ENCODE measurements at regions of chr13 and their contacts with region 1.

Region 1: GRCh38 chr13:24220086-24220703 is 59.7 kb downstream of the SPATA13 start:
- DNase-seq: peak in 6 of 9 experiments; percentile 41 to 86 (median 54)
- ATAC-seq: peak; percentile 82
- H3K4me3 ChIP-seq: no peak overlapping the region
- H3K4me3 Mint-ChIP-seq: no peak overlapping the region
- H3K27ac ChIP-seq: no peak overlapping the region
- H3K27ac Mint-ChIP-seq: no peak overlapping the region
- H3K4me1 ChIP-seq: peaks cover 19% of the 10 kb centered on the region
- H3K4me1 Mint-ChIP-seq: peaks cover 49% of the 10 kb centered on the region
- H3K27me3 ChIP-seq: no peaks in the 10 kb centered on the region
- H3K27me3 Mint-ChIP-seq: no peaks in the 10 kb centered on the region
- CTCF ChIP-seq: peak; percentile 74

Region 2: DNA sequence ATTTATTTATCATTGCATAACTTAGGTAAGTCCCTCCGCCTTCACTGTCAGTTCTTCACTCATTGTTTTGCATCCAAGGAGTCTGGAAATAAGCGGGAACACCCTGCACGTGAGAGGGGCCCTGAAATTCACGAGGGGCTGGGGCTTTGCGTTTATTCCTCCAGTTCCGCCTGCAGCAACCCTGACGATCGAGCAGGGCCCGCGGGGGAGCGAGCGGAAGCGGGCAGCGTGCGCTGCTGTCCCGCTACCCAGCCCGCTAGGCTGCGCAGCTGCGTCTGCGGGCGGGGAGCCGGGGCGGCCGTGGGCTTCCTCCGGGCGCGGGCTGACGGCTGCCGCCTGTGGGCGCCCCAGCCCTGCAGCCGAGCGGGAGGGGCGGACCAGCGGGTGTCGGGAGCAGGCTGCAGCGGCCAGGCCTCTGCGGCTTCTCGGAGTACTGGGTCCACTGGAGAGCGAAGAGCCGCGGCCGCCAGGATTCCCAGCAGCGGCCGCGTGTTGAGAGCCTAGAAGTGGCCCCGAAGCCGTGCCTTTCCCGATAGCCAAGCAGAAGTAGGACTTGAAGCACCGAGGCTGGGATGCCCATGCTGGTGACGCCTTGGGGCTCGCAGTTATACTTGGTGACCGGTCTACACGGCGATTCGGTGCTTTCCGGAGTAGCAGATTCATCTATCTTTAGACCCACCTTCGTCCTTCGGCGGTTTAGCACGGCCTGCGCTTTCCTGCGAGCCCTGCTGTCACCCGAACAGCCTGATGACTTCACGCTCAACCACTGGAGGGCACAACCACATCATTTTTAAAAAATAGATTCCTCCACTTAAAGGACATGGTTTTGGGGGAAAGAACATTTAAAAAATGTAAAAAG is 753.8 kb before region 1 on chr13:
- CTCF ChIA-PET with region 1: interaction called, 7 read pairs
- POLR2A ChIA-PET with region 1: no interaction called
- intact Hi-C with region 1: loop called (anchors 1 kb)
- DNase-seq: peak; percentile 26 to 77 (median 55)
- ATAC-seq: peak; percentile 85
- H3K4me3 ChIP-seq: peak overlapping the region; percentile 49 to 53
- H3K4me3 Mint-ChIP-seq: peak overlapping the region; percentile 82
- H3K27ac ChIP-seq: no peak overlapping the region
- H3K27ac Mint-ChIP-seq: peak overlapping the region; percentile 11
- H3K4me1 ChIP-seq: no peaks in the 10 kb centered on the region
- H3K4me1 Mint-ChIP-seq: peaks cover 5% of the 10 kb centered on the region
- H3K27me3 ChIP-seq: no peaks in the 10 kb centered on the region
- H3K27me3 Mint-ChIP-seq: peaks cover 13% of the 10 kb centered on the region
- CTCF ChIP-seq: peak; percentile 42

Region 3: DNA sequence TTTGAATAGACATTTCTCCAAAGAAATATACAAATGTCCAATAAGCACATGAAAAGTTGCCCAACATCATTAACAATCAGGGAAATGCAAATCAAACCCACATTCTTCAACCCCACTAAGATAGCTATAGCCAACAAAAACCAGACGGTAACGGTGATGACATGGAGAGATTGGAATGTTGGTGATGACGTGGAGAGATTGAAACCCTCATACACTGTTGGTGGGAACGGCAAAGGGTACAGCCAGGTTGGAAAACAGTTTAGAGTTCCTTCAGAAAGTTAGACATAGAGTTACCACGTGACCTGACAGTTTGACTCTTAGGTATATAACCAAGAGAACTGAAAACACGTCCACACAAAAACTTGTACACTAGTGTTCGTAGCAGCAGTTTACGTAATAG is 601.9 kb before region 1 on chr13:
- CTCF ChIA-PET with region 1: no interaction called
- POLR2A ChIA-PET with region 1: no interaction called
- intact Hi-C with region 1: no loop called
- DNase-seq: no peak
- ATAC-seq: no peak
- H3K4me3 ChIP-seq: no peak overlapping the region
- H3K4me3 Mint-ChIP-seq: no peak overlapping the region
- H3K27ac ChIP-seq: no peak overlapping the region
- H3K27ac Mint-ChIP-seq: no peak overlapping the region
- H3K4me1 ChIP-seq: no peaks in the 10 kb centered on the region
- H3K4me1 Mint-ChIP-seq: no peaks in the 10 kb centered on the region
- H3K27me3 ChIP-seq: no peaks in the 10 kb centered on the region
- H3K27me3 Mint-ChIP-seq: peaks cover 11% of the 10 kb centered on the region
- CTCF ChIP-seq: no peak

Region 4: DNA sequence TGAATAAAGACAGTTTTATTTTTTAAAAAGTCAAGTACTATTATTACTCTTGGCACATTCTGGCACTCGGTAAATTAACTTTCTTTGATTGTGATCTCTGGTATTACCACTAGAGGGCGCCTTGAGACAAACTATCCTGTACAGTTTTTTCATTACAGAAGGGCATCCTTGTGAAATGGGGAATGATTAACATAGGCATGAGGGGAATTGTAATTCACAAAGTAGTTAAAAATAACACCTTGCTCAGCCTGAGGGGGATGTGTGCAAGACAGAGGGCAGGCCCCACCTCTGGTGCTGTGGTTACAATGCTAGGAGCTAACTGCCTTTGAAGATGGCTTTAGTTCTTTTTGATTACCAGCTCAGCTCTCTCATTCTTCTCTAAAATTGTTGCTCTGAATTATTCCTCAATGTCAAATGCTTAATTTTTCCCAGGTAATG is 298.7 kb before region 1 on chr13:
- CTCF ChIA-PET with region 1: no interaction called
- POLR2A ChIA-PET with region 1: no interaction called
- intact Hi-C with region 1: loop called (anchors 1 kb)
- DNase-seq: peak in 2 of 9 experiments; percentile 44 to 48
- ATAC-seq: peak; percentile 40
- H3K4me3 ChIP-seq: no peak overlapping the region
- H3K4me3 Mint-ChIP-seq: no peak overlapping the region
- H3K27ac ChIP-seq: no peak overlapping the region
- H3K27ac Mint-ChIP-seq: no peak overlapping the region
- H3K4me1 ChIP-seq: no peaks in the 10 kb centered on the region
- H3K4me1 Mint-ChIP-seq: no peaks in the 10 kb centered on the region
- H3K27me3 ChIP-seq: no peaks in the 10 kb centered on the region
- H3K27me3 Mint-ChIP-seq: peaks cover 24% of the 10 kb centered on the region
- CTCF ChIP-seq: peak; percentile 55

Region 5: GRCh38 chr13:24053519-24054251 is 166.5 kb before region 1 on chr13:
- CTCF ChIA-PET with region 1: interaction called, 75 read pairs
- POLR2A ChIA-PET with region 1: interaction called, 3 read pairs
- intact Hi-C with region 1: loop called (anchors 1 kb)
- DNase-seq: peak; percentile 22 to 80 (median 62)
- ATAC-seq: peak; percentile 99
- H3K4me3 ChIP-seq: no peak overlapping the region
- H3K4me3 Mint-ChIP-seq: no peak overlapping the region
- H3K27ac ChIP-seq: no peak overlapping the region
- H3K27ac Mint-ChIP-seq: no peak overlapping the region
- H3K4me1 ChIP-seq: no peaks in the 10 kb centered on the region
- H3K4me1 Mint-ChIP-seq: peaks cover 8% of the 10 kb centered on the region
- H3K27me3 ChIP-seq: no peaks in the 10 kb centered on the region
- H3K27me3 Mint-ChIP-seq: no peaks in the 10 kb centered on the region
- CTCF ChIP-seq: peak; percentile 61

Region 6: GRCh38 chr13:24160454-24161009 is 59.7 kb before region 1 on chr13 and contains the start of gene SPATA13:
- CTCF ChIA-PET with region 1: interaction called, 12 read pairs
- POLR2A ChIA-PET with region 1: no interaction called
- intact Hi-C with region 1: loop called (anchors 5 kb)
- DNase-seq: peak; percentile 87 to 97 (median 94)
- ATAC-seq: peak; percentile 96
- H3K4me3 ChIP-seq: peak within 1 kb of the TSS; percentile 87 to 89
- H3K4me3 Mint-ChIP-seq: peak within 1 kb of the TSS; percentile 87
- H3K27ac ChIP-seq: peak within 1 kb of the TSS; percentile 29 to 56
- H3K27ac Mint-ChIP-seq: peak within 1 kb of the TSS; percentile 72
- H3K4me1 ChIP-seq: peaks cover 16% of the 10 kb centered on the region
- H3K4me1 Mint-ChIP-seq: peaks cover 26% of the 10 kb centered on the region
- H3K27me3 ChIP-seq: no peaks in the 10 kb centered on the region
- H3K27me3 Mint-ChIP-seq: no peaks in the 10 kb centered on the region
- CTCF ChIP-seq: no peak
- total RNA-seq, gene SPATA13: 102 to 106 TPM

Region 7: DNA sequence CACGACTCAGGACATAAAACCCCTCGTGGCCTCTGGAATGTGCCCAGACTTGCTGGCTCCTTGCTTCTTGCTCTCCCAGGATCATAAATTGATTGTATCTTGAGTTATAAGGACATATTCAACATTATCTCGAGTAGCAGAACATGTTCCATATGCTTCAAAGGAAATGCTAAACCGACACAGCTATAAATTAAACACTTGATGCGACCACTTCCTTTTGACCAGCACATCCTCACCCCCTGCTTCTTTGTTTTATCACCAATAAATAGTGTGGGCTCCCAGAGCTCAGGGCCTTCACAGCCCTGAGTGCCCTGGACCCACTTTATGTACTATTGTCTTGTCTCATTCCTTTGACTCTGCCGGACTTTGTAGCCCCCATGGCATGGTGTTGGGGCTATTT is 718.8 kb after region 1 on chr13:
- CTCF ChIA-PET with region 1: no interaction called
- POLR2A ChIA-PET with region 1: no interaction called
- intact Hi-C with region 1: no loop called
- DNase-seq: no peak
- ATAC-seq: no peak
- H3K4me3 ChIP-seq: no peak overlapping the region
- H3K4me3 Mint-ChIP-seq: no peak overlapping the region
- H3K27ac ChIP-seq: no peak overlapping the region
- H3K27ac Mint-ChIP-seq: no peak overlapping the region
- H3K4me1 ChIP-seq: no peaks in the 10 kb centered on the region
- H3K4me1 Mint-ChIP-seq: no peaks in the 10 kb centered on the region
- H3K27me3 ChIP-seq: no peaks in the 10 kb centered on the region
- H3K27me3 Mint-ChIP-seq: peaks cover 32% of the 10 kb centered on the region
- CTCF ChIP-seq: no peak

Measured in CD8-positive, alpha-beta T cell (primary cell).